HCT116 (cell line): ENCODE measurements at regions of chr4 and their contacts with region 1.

Region 1: DNA sequence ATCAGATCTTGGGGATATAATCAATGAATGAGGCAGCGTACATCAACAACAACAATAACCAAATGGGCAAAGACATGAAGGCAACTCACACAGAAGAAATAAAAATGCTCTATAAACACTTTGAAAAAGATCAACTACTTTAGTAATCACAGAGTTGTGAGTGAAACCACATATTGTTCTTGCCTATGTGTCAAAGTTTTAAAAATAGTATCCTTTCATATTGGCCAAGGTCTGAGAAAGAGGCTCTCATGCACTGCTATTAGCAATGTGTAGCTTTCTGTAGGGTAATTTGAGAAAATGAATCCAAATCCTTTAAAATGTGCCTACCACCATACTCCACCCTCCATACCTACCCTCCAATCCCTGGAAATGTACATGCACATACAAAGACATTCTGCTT is 25.0 kb downstream of the COQ2 start:
- DNase-seq: no peak
- ATAC-seq: no peak
- H3K4me3 ChIP-seq: no peak overlapping the region
- H3K27ac ChIP-seq: no peak overlapping the region
- H3K4me1 ChIP-seq: peaks cover 32 to 60% of the 10 kb centered on the region in 2 experiments
- H3K27me3 ChIP-seq: no peaks in the 10 kb centered on the region
- CTCF ChIP-seq: no peak
- POLR2A ChIP-seq: no peak
- RAD21 ChIP-seq: no peak

Region 2: GRCh38 chr4:82851885-82852750 is 407.5 kb before region 1 on chr4:
- CTCF ChIA-PET with region 1: interaction called, 6 read pairs
- POLR2A ChIA-PET with region 1: no interaction called
- RAD21 ChIA-PET with region 1: no interaction called
- intact Hi-C with region 1: loop called (anchors 2 kb)
- DNase-seq: peak; percentile 33
- ATAC-seq: peak; percentile 89
- H3K4me3 ChIP-seq: no peak overlapping the region
- H3K27ac ChIP-seq: no peak overlapping the region
- H3K4me1 ChIP-seq: no peaks in the 10 kb centered on the region
- H3K27me3 ChIP-seq: no peaks in the 10 kb centered on the region
- CTCF ChIP-seq: peak; percentile 39 to 67 (median 60); a peak in 5 of 6 replicates
- POLR2A ChIP-seq: no peak
- RAD21 ChIP-seq: peak; percentile 64

Region 3: DNA sequence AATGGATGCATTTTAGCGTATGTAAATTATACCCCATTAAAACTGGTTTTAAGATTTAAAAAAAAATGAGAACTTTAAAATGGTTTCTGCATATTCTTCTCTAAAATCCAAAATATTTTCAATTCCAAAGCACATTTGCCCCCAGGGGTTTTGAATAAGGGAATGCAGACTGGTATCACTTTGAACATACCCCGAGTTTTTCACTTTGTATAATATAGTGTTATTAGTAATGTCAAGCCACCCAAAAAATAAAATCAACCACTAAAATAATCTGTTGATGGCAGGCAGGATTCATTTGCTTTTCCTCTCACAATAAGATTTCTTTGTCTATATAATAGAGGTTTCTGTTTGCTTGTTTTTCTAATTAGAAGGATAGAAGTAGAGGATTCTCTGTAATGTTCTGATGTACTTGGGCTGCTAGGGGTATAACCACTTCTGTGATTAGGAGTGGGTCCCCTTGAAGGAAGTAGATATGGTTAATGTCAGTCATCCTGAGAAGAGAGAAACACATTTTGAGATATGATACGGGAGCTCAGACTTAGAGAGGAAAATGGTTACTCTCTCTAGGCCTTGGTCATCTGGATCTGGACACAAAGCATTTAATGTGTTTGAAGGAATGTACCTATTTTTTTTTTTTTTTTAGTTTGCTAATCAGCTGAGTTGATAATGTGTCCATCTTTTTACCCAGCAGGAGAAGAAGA is 239.6 kb before region 1 on chr4:
- CTCF ChIA-PET with region 1: no interaction called
- POLR2A ChIA-PET with region 1: no interaction called
- RAD21 ChIA-PET with region 1: no interaction called
- intact Hi-C with region 1: no loop called
- DNase-seq: no peak
- ATAC-seq: no peak
- H3K4me3 ChIP-seq: no peak overlapping the region
- H3K27ac ChIP-seq: no peak overlapping the region
- H3K4me1 ChIP-seq: no peaks in the 10 kb centered on the region
- H3K27me3 ChIP-seq: no peaks in the 10 kb centered on the region
- CTCF ChIP-seq: no peak
- POLR2A ChIP-seq: no peak
- RAD21 ChIP-seq: no peak

Region 4: DNA sequence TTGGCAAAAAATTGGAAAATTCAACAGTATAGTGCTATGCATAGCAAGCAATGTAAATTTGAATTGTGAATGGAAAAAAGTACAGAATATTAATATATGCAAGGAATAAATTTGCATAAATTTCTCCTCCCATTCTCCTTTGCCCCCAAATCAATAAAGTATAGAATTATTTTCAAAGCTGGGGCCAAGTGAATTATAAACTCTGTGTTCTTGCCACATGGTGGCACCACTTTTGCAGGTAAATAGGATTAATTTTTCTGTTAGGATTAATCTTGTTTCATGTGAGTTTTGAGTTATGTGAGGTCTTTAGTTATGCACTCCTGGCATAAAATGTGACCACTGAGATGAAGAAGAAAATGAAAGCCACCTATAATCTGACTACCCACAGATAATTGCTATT is 204.7 kb before region 1 on chr4:
- CTCF ChIA-PET with region 1: interaction called, 20 read pairs
- POLR2A ChIA-PET with region 1: no interaction called
- RAD21 ChIA-PET with region 1: interaction called in 1 of 2 experiments, 3 read pairs
- intact Hi-C with region 1: loop called (anchors 1 kb)
- DNase-seq: peak; percentile 10
- ATAC-seq: peak; percentile 47
- H3K4me3 ChIP-seq: no peak overlapping the region
- H3K27ac ChIP-seq: no peak overlapping the region
- H3K4me1 ChIP-seq: no peaks in the 10 kb centered on the region
- H3K27me3 ChIP-seq: no peaks in the 10 kb centered on the region
- CTCF ChIP-seq: peak; percentile 28 to 60 (median 57); a peak in 5 of 6 replicates
- POLR2A ChIP-seq: no peak
- RAD21 ChIP-seq: peak; percentile 69

Region 5: DNA sequence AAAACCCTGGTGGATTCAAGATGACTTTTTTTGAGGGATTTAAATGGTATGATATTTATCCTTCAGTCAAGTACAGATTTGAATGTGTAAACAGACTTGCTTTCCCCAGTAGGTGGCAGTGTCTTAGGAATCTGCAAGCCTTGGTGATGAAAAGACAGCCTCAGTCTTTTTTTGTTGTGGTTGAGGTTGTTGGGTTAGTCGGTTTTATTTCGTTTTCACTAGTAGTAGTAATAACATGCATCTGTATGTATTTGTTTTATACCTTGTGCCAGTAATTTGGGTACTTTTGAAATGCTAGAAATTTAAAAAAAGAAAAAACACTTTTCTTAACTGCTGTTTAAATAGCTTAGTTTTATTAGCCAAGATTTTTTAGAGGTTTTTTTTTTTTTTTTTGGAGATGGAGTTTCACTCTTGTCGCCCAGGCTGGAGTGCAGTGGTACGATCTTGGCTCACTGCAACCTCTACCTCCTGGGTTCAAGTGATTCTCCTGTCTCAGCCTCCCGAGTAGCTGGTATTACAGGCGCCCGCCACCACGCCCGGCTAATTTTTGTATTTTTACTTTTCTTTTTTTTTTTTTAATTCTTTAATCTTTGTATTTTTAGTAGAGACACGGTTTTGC is 185.4 kb before region 1 on chr4:
- CTCF ChIA-PET with region 1: interaction called, 9 read pairs
- POLR2A ChIA-PET with region 1: interaction called, 3 read pairs
- RAD21 ChIA-PET with region 1: no interaction called
- intact Hi-C with region 1: loop called (anchors 2 kb)
- DNase-seq: peak; percentile 65
- ATAC-seq: peak; percentile 86
- H3K4me3 ChIP-seq: no peak overlapping the region
- H3K27ac ChIP-seq: no peak overlapping the region
- H3K4me1 ChIP-seq: peaks cover 0 to 15% of the 10 kb centered on the region in 2 experiments; a peak in 2 of 4 replicates
- H3K27me3 ChIP-seq: no peaks in the 10 kb centered on the region
- CTCF ChIP-seq: peak; percentile 71 to 81 (median 73); a peak in 5 of 6 replicates
- POLR2A ChIP-seq: no peak
- RAD21 ChIP-seq: peak; percentile 69

Region 6: GRCh38 chr4:83974156-83974780 is 714.7 kb after region 1 on chr4:
- CTCF ChIA-PET with region 1: no interaction called
- POLR2A ChIA-PET with region 1: no interaction called
- RAD21 ChIA-PET with region 1: no interaction called
- intact Hi-C with region 1: no loop called
- DNase-seq: no peak
- ATAC-seq: no peak
- H3K4me3 ChIP-seq: no peak overlapping the region
- H3K27ac ChIP-seq: no peak overlapping the region
- H3K4me1 ChIP-seq: peaks cover 0 to 7% of the 10 kb centered on the region in 2 experiments; a peak in 2 of 4 replicates
- H3K27me3 ChIP-seq: no peaks in the 10 kb centered on the region
- CTCF ChIP-seq: no peak
- POLR2A ChIP-seq: no peak
- RAD21 ChIP-seq: no peak